ENCODE measurements at regions of chr3 and their contacts with region 1.

Region 1: GRCh38 chr3:39406368-39407258 is at the start of gene RPSA:
- DNase-seq: peak; percentile 98
- ATAC-seq: peak; percentile 93
- H3K4me3 ChIP-seq: peak within 1 kb of the TSS; percentile 72 to 97 (median 83)
- H3K4me3 Mint-ChIP-seq: peak within 1 kb of the TSS; percentile 89
- H3K27ac ChIP-seq: peak within 1 kb of the TSS; percentile 75 to 76
- H3K27ac Mint-ChIP-seq: peak within 1 kb of the TSS; percentile 88
- H3K4me1 ChIP-seq: peaks cover 22 to 35% of the 10 kb centered on the region in 2 donors
- H3K4me1 Mint-ChIP-seq: peaks cover 39% of the 10 kb centered on the region
- H3K27me3 ChIP-seq: no peaks in the 10 kb centered on the region
- H3K27me3 Mint-ChIP-seq: no peaks in the 10 kb centered on the region
- CTCF ChIP-seq: peak; percentile 22
- total RNA-seq, gene RPSA: 1,418 and 1,460 TPM in 2 replicates

Region 2: GRCh38 chr3:38164966-38165680 is 1241.5 kb before region 1 on chr3 and contains the start of gene OXSR1:
- CTCF ChIA-PET with region 1: no interaction called
- POLR2A ChIA-PET with region 1: no interaction called
- intact Hi-C with region 1: loop called (anchors 2 kb)
- DNase-seq: peak; percentile 99
- ATAC-seq: peak; percentile 89
- H3K4me3 ChIP-seq: peak within 1 kb of the TSS; percentile 64 to 97 (median 85)
- H3K4me3 Mint-ChIP-seq: peak within 1 kb of the TSS; percentile 94
- H3K27ac ChIP-seq: peak within 1 kb of the TSS; percentile 98 to 100
- H3K27ac Mint-ChIP-seq: peak within 1 kb of the TSS; percentile 100
- H3K4me1 ChIP-seq: peaks cover 21 to 28% of the 10 kb centered on the region in 2 donors
- H3K4me1 Mint-ChIP-seq: peaks cover 50% of the 10 kb centered on the region
- H3K27me3 ChIP-seq: no peaks in the 10 kb centered on the region
- H3K27me3 Mint-ChIP-seq: no peaks in the 10 kb centered on the region
- CTCF ChIP-seq: no peak
- total RNA-seq, gene OXSR1: 37.9 and 41.5 TPM in 2 replicates

Region 3: GRCh38 chr3:39051647-39052561 is 354.7 kb before region 1 on chr3 and contains the starts of genes SCN11A and WDR48:
- CTCF ChIA-PET with region 1: no interaction called
- POLR2A ChIA-PET with region 1: no interaction called
- intact Hi-C with region 1: loop called (anchors 1 kb)
- DNase-seq: peak; percentile 94
- ATAC-seq: peak; percentile 94
- H3K4me3 ChIP-seq: peak within 1 kb of the TSS; percentile 72 to 93 (median 87)
- H3K4me3 Mint-ChIP-seq: peak within 1 kb of the TSS; percentile 97
- H3K27ac ChIP-seq: peak within 1 kb of the TSS; percentile 87 to 98
- H3K27ac Mint-ChIP-seq: peak within 1 kb of the TSS; percentile 98
- H3K4me1 ChIP-seq: peaks cover 11 to 15% of the 10 kb centered on the region in 2 donors
- H3K4me1 Mint-ChIP-seq: peaks cover 44% of the 10 kb centered on the region
- H3K27me3 ChIP-seq: no peaks in the 10 kb centered on the region
- H3K27me3 Mint-ChIP-seq: no peaks in the 10 kb centered on the region
- CTCF ChIP-seq: no peak
- total RNA-seq, gene SCN11A: 0.24 and 0.25 TPM in 2 replicates
- total RNA-seq, gene WDR48: 67.6 and 68.6 TPM in 2 replicates

Region 4: DNA sequence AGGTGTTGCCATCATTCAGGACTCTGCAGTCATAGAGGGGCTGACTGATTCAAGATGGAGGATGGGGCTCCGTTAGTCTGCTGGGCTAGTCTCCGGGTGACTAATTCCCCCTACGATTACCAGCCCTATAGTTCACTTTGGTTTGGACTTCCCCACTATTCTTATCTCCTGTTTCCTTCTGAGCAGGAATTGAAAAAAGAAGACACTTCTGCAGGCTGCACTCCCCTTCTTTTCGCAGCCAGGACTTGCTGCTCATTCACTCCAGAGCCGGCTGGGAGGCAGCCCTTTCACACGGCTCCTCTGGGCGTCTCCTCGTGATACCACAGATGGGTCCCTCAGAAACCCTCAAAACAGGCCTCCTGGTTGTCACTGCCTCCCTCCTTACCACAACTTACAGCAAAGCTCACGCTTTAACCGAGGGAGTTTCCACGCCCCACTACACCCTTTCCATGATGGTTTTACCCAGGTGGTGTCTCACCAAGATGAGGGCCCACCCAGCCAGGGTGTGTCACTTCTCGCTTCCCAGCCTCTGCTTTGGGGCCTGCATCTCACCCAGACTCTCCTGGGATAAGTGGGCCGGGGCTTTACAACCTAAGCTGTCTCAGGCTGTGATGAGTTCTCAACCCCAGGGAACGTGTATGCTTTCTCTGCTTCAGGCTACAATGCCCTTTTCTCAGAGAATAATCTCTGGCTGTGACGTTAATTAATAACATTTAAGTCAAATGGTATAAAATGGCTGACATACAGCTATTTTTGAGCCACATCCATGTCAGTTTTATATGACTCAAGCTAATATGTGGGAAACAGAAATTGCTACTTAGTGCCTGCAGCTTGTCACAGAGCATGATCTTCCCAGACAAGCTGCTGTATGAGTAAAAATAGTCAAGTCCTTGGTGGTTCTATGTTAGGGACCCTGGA is 138.7 kb before region 1 on chr3:
- CTCF ChIA-PET with region 1: no interaction called
- POLR2A ChIA-PET with region 1: no interaction called
- intact Hi-C with region 1: no loop called
- DNase-seq: no peak
- ATAC-seq: no peak
- H3K4me3 ChIP-seq: no peak overlapping the region
- H3K4me3 Mint-ChIP-seq: no peak overlapping the region
- H3K27ac ChIP-seq: no peak overlapping the region
- H3K27ac Mint-ChIP-seq: no peak overlapping the region
- H3K4me1 ChIP-seq: peaks cover 28% of the 10 kb centered on the region in 2 donors
- H3K4me1 Mint-ChIP-seq: peaks cover 35% of the 10 kb centered on the region
- H3K27me3 ChIP-seq: no peaks in the 10 kb centered on the region
- H3K27me3 Mint-ChIP-seq: no peaks in the 10 kb centered on the region
- CTCF ChIP-seq: no peak

Region 5: GRCh38 chr3:39361252-39361927 is 45.2 kb before region 1 on chr3:
- CTCF ChIA-PET with region 1: no interaction called
- POLR2A ChIA-PET with region 1: interaction called, 12 read pairs
- intact Hi-C with region 1: no loop called
- DNase-seq: no peak
- ATAC-seq: no peak
- H3K4me3 ChIP-seq: no peak overlapping the region
- H3K4me3 Mint-ChIP-seq: no peak overlapping the region
- H3K27ac ChIP-seq: no peak overlapping the region
- H3K27ac Mint-ChIP-seq: no peak overlapping the region
- H3K4me1 ChIP-seq: peaks cover 3 to 4% of the 10 kb centered on the region in 2 donors
- H3K4me1 Mint-ChIP-seq: peaks cover 6% of the 10 kb centered on the region
- H3K27me3 ChIP-seq: no peaks in the 10 kb centered on the region
- H3K27me3 Mint-ChIP-seq: no peaks in the 10 kb centered on the region
- CTCF ChIP-seq: no peak

Region 6: GRCh38 chr3:39447637-39448483 is 41.2 kb after region 1 on chr3:
- CTCF ChIA-PET with region 1: interaction called, 4 read pairs
- POLR2A ChIA-PET with region 1: no interaction called
- intact Hi-C with region 1: loop called (anchors 2 kb)
- DNase-seq: peak; percentile 77
- ATAC-seq: peak; percentile 54
- H3K4me3 ChIP-seq: no peak overlapping the region
- H3K4me3 Mint-ChIP-seq: no peak overlapping the region
- H3K27ac ChIP-seq: no peak overlapping the region
- H3K27ac Mint-ChIP-seq: no peak overlapping the region
- H3K4me1 ChIP-seq: no peaks in the 10 kb centered on the region
- H3K4me1 Mint-ChIP-seq: peaks cover 2% of the 10 kb centered on the region
- H3K27me3 ChIP-seq: peaks cover 0 to 4% (median 2%) of the 10 kb centered on the region in 4 experiments
- H3K27me3 Mint-ChIP-seq: peaks cover 5% of the 10 kb centered on the region
- CTCF ChIP-seq: peak; percentile 95

Region 7: DNA sequence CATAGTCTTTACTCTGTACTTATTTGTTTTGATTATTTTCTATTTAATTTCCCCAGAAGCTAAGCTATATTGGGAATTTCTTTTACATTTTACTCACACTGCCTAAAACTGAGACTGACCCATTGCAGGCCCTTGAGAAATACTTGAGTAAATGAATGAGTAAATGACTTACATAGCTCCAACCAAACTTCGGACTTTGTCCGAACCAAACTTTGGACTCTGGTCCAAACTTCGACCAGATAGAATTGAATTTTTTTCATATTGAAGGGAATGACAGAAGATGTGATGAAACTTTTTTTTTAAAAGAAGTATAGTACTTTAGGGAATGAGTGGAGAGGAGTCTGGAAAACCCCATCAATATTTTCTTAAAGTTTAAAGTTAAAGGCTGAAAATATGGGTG is 327.2 kb after region 1 on chr3:
- CTCF ChIA-PET with region 1: no interaction called
- POLR2A ChIA-PET with region 1: no interaction called
- intact Hi-C with region 1: no loop called
- DNase-seq: no peak
- ATAC-seq: no peak
- H3K4me3 ChIP-seq: no peak overlapping the region
- H3K4me3 Mint-ChIP-seq: no peak overlapping the region
- H3K27ac ChIP-seq: no peak overlapping the region
- H3K27ac Mint-ChIP-seq: no peak overlapping the region
- H3K4me1 ChIP-seq: no peaks in the 10 kb centered on the region
- H3K4me1 Mint-ChIP-seq: no peaks in the 10 kb centered on the region
- H3K27me3 ChIP-seq: no peaks in the 10 kb centered on the region
- H3K27me3 Mint-ChIP-seq: no peaks in the 10 kb centered on the region
- CTCF ChIP-seq: no peak